Posterior vena cava (tissue), 2 donors: ENCODE measurements at regions of chr3 and their contacts with region 1.

Region 1: GRCh38 chr3:148955544-148956346 is 35.6 kb upstream of the GYG1 start:
- DNase-seq: no peak

Region 2: GRCh38 chr3:148439254-148439822 is 516.4 kb before region 1 on chr3:
- intact Hi-C with region 1: no loop called
- DNase-seq: no peak

Region 3: DNA sequence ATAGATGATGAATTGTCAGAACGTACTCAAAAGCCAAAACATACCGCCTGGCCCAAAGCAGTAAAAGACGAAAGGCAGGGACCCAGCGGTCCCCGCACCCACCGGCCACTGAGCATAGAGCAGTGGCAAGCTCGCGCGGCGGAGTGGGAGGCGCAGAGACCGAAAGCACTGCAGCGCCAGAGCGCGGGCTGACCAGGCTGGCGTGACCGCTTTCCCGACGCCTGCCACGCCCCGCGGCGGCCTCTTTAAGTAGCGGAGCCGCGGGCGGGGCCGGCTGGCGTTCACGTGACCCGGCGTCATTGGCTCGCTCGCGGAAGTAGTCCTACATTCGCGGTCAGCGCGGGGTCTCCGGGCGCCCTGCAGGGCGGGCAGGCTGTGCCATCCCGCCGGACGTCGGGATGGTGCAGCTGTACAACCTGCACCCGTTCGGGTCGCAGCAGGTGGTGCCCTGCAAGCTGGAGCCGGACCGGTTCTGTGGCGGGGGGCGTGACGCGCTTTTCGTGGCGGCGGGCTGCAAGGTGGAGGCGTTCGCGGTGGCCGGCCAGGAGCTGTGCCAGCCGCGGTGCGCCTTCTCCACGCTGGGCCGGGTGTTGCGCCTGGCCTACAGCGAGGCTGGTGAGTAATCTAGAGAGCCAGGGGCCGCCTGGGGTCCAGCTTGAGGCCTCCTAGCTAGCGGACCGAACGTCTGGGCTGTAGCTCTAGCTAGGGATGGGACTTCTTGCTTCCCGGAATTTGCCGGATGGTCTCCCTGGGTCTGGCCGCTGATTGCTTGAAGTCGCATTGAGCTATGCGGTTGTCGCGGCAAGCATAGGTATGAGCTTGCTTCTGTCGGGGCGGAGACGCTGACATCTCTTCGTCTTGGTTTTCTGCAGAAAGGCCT is 173.8 kb after region 1 on chr3 and contains the start of gene HPS3:
- intact Hi-C with region 1: loop called in 1 of 2 experiments (anchors 10 kb)
- DNase-seq: peak; percentile 98
- total RNA-seq, gene HPS3: 14.5 to 16.3 TPM

Region 4: GRCh38 chr3:149145974-149146373 is 190.2 kb after region 1 on chr3:
- intact Hi-C with region 1: no loop called
- DNase-seq: no peak